GM10248 (cell line): ENCODE measurements at regions of chr7 and their contacts with region 1.

Region 1: GRCh38 chr7:23570592-23571200 is 26.5 kb upstream of the CCDC126 start:
- DNase-seq: peak; percentile 77
- CTCF ChIP-seq: peak; percentile 81

Region 2: DNA sequence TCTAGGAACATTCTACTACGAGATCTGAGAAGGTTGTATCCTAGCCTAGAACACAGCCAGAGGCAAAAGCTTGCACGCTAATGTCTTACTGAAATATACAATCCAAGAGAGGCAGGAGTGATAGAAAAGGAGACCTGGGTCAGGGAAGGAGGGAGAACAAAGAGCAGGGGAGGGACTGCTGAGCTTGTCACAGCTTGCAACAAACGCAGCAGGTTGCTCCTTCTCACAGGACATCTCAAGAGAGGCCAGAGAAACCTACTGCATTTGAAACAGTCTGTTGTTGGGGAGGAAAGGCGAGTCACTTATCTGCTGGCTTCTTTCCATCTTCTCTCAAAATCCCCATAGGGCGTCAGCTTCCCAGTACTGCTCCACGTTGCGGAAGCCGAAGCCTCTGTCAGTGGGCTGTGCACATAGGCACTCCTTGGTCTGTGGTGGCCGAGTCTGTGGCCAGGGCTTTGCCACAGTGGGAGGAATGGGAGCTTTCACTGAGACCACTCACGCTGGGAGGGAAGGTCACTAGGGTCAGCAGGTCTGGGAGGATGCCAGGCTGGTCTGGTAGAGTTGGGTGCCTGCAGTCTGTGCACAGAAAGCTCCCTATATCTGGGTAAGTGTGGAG is 349.9 kb before region 1 on chr7:
- CTCF ChIA-PET with region 1: no interaction called
- POLR2A ChIA-PET with region 1: no interaction called
- DNase-seq: no peak
- CTCF ChIP-seq: no peak

Region 3: GRCh38 chr7:23586159-23586558 is 15.5 kb after region 1 on chr7:
- CTCF ChIA-PET with region 1: interaction called, 29 read pairs
- POLR2A ChIA-PET with region 1: interaction called, 3 read pairs
- DNase-seq: no peak
- CTCF ChIP-seq: no peak

Region 4: DNA sequence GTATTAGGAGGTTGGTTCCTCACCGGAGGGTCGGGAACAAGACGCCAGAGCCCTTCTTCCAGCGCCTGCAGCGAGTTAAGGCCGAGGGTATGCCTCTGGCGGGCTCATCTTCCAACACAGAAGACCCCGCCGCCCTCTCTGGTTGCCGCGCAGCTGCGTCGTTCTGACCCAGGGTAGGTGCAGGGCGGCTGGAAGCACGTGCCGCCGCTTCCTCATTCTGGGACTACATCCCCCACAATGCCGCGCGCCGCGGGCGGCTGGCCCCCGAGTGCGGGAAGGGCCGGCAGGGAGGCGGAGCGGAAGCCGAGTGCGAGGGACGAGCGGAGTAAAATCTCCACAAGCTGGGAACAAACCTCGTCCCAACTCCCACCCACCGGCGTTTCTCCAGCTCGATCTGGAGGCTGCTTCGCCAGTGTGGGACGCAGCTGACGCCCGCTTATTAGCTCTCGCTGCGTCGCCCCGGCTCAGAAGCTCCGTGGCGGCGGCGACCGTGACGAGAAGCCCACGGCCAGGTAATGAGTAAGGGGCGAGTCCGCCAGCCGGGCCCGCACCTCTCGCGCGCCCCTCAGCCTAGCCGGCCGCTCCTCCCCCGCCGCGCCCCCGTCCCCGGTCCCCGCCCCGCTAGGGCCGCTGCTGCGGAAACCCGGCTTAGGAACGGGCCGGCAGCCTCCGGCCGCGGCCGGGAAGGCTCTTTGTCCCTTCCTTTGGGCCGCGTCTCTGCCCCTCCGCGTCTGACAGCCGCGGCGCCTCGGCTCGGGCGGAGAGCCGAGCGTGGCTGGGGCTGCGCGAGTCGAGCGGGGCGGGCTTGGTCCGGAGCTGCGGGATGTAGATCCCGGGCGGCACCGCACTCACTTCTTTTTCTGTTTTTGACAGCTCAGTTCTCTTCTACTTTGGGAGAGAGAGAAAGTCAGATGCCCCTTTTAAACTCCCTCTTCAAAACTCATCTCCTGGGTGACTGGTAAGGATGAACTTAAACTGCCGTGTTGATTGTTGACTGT is 26.7 kb after region 1 on chr7 and contains the start of gene CCDC126:
- CTCF ChIA-PET with region 1: interaction called, 11 read pairs
- POLR2A ChIA-PET with region 1: no interaction called
- DNase-seq: peak; percentile 89
- CTCF ChIP-seq: no peak

Region 5: DNA sequence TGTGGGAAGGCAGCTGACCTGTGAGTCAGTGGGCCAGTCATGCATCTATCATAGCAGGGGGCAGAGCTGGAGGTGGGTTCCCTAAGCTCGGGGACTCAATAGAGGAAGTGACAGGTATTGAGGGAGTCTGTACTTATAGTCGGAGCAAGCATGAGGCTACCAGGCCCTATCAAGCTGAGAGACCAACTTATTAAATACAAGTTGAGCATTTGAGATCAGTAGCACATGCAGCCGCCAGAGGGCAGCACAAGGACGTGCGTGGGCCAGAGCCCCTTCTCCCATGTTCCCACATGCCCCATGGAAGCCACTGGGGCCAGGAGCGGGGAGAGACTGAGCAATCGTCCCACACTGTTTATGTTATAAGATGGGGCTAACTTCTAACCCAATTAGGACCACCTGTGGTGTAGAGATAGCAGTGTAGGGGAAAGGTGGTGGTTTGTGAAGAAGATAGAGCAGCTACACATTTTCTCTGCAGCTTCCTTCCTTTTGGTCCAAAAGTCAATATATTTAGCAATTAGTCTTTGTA is 126.3 kb after region 1 on chr7:
- CTCF ChIA-PET with region 1: interaction called, 48 read pairs
- POLR2A ChIA-PET with region 1: no interaction called
- DNase-seq: peak; percentile 70
- CTCF ChIP-seq: peak; percentile 72

Region 6: GRCh38 chr7:23712368-23713284 is 141.9 kb after region 1 on chr7:
- CTCF ChIA-PET with region 1: interaction called, 126 read pairs
- POLR2A ChIA-PET with region 1: no interaction called
- DNase-seq: peak; percentile 56
- CTCF ChIP-seq: peak; percentile 29

Region 7: DNA sequence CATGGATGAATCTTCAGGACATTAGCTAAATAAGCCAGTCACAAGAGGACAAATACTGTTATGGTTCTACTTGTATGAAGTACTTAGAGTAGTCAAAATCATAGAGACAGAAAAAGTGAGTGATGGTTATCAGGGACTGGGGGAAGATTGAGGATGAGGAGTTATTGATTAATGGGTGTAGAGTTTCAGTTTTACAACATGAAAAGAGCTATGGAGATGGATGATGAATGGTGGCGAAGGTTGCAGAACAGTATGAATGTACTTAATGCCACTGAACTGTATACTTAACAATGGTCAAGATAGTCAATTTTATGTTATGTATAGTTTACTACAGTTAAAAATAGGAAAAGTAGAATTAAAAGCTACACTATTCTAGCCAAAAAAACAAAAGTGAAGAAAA is 147.1 kb after region 1 on chr7:
- CTCF ChIA-PET with region 1: interaction called, 126 read pairs
- POLR2A ChIA-PET with region 1: no interaction called
- DNase-seq: no peak
- CTCF ChIP-seq: no peak

Region 8: DNA sequence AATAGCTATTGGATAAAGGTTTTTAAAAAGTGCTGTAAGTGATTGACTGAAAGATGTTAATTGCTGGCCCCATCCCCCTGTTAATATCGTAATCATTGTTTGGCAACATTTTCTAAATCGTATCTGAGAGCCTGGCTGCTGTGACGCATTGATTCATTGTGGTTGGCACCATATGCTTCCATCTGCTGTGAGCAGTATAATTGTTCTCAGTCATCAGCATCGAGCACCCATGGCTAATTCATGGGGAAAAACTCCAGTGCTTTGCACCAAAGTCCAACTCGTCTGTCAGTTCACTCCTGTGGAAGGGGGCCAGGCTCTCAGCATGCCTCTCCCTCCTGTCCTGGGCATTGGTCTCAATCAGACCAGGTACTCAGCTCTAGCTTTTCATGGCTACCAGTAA is 344.5 kb after region 1 on chr7:
- CTCF ChIA-PET with region 1: no interaction called
- POLR2A ChIA-PET with region 1: no interaction called
- DNase-seq: no peak
- CTCF ChIP-seq: no peak